ENCODE measurements at regions of chr1 and their contacts with region 1.

Region 1: GRCh38 chr1:156689035-156689952 is 12.1 kb upstream of the NES start:
- DNase-seq: peak; percentile 76 to 91 (median 88)
- ATAC-seq: peak; percentile 86 to 92
- H3K4me3 ChIP-seq: no peak overlapping the region
- H3K27ac ChIP-seq: no peak overlapping the region
- H3K4me1 ChIP-seq: no peaks in the 10 kb centered on the region
- H3K27me3 ChIP-seq: no peaks in the 10 kb centered on the region

Region 2: DNA sequence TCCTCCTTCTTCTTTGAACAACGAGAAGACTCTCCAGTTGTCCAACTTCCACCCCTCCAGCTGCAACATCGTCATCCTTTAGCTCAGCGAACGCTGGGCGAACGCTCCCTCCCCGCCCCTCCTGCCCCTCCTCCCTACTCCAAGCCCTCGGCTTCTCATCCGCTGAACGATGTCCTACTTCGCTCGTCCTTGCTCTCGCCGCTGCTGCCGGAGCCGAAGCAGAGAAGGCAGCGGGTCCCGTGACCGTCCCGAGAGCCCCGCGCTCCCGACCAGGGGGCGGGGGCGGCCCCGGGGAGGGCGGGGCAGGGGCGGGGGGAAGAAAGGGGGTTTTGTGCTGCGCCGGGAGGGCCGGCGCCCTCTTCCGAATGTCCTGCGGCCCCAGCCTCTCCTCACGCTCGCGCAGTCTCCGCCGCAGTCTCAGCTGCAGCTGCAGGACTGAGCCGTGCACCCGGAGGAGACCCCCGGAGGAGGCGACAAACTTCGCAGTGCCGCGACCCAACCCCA is 47.5 kb before region 1 on chr1 and contains the start of gene BCAN:
- intact Hi-C with region 1: no loop called
- DNase-seq: no peak
- ATAC-seq: peak; percentile 58 to 65
- H3K4me3 ChIP-seq: peak within 1 kb of the TSS; percentile 56
- H3K27ac ChIP-seq: no peak within 1 kb of the TSS
- H3K4me1 ChIP-seq: no peaks in the 10 kb centered on the region
- H3K27me3 ChIP-seq: no peaks in the 10 kb centered on the region
- total RNA-seq, gene BCAN: 0.23 to 0.29 TPM in 2 of 4 donors, not detected in the others

Region 3: GRCh38 chr1:156721535-156721934 is 32.2 kb after region 1 on chr1:
- intact Hi-C with region 1: loop called (anchors 2 to 5 kb)
- DNase-seq: no peak
- ATAC-seq: no peak
- H3K4me3 ChIP-seq: no peak overlapping the region
- H3K27ac ChIP-seq: no peak overlapping the region
- H3K4me1 ChIP-seq: peaks cover 9% of the 10 kb centered on the region
- H3K27me3 ChIP-seq: no peaks in the 10 kb centered on the region

Region 4: GRCh38 chr1:156728597-156729462 is 39.5 kb after region 1 on chr1 and contains the start of gene ISG20L2:
- intact Hi-C with region 1: loop called (anchors 2 to 5 kb)
- DNase-seq: peak; percentile 98 to 99 (median 99)
- ATAC-seq: peak; percentile 96 to 97
- H3K4me3 ChIP-seq: peak within 1 kb of the TSS; percentile 64
- H3K27ac ChIP-seq: peak within 1 kb of the TSS; percentile 78
- H3K4me1 ChIP-seq: peaks cover 18% of the 10 kb centered on the region
- H3K27me3 ChIP-seq: no peaks in the 10 kb centered on the region
- total RNA-seq, gene ISG20L2: 13.0 to 23.0 (median 13.9) TPM

Region 5: GRCh38 chr1:156767101-156767878 is 78.0 kb after region 1 on chr1 and contains the start of gene PRCC:
- intact Hi-C with region 1: no loop called
- DNase-seq: peak; percentile 97 to 98 (median 98)
- ATAC-seq: peak; percentile 97 to 98
- H3K4me3 ChIP-seq: peak within 1 kb of the TSS; percentile 96
- H3K27ac ChIP-seq: peak within 1 kb of the TSS; percentile 93
- H3K4me1 ChIP-seq: peaks cover 2% of the 10 kb centered on the region
- H3K27me3 ChIP-seq: no peaks in the 10 kb centered on the region
- total RNA-seq, gene PRCC: 36.3 to 47.1 (median 44.1) TPM

Region 6: DNA sequence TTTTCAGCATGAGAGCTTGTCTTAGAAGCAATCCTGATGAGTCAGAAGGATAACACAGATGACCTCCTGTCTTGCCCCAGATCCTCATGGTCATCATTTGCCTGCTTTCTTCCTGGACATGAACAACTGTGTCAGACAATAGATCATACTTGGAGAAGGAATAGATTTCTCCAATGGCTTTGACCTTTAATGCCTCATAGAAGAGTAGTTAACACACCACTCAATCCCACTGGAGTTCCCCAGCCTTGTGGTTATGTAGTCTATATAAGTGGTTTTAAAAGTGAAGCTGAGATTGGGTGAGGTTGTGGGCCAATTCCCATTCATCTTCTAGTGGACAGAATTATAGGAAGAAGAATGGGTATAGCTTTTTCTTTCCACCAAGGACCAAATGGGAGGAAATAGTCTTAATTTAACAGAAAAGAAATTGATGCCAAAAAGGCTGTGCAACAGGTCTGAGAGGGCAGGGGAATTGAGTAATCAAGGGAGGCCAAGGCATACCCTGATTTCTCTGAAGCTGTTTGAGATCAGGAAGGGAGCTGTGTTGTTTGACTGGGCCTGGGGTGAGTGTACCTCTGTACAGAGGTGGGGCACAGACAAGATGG is 92.4 kb after region 1 on chr1:
- intact Hi-C with region 1: no loop called
- DNase-seq: no peak
- ATAC-seq: peak in 1 of 2 donors; percentile 53
- H3K4me3 ChIP-seq: no peak overlapping the region
- H3K27ac ChIP-seq: no peak overlapping the region
- H3K4me1 ChIP-seq: peaks cover 3% of the 10 kb centered on the region
- H3K27me3 ChIP-seq: no peaks in the 10 kb centered on the region

Region 7: DNA sequence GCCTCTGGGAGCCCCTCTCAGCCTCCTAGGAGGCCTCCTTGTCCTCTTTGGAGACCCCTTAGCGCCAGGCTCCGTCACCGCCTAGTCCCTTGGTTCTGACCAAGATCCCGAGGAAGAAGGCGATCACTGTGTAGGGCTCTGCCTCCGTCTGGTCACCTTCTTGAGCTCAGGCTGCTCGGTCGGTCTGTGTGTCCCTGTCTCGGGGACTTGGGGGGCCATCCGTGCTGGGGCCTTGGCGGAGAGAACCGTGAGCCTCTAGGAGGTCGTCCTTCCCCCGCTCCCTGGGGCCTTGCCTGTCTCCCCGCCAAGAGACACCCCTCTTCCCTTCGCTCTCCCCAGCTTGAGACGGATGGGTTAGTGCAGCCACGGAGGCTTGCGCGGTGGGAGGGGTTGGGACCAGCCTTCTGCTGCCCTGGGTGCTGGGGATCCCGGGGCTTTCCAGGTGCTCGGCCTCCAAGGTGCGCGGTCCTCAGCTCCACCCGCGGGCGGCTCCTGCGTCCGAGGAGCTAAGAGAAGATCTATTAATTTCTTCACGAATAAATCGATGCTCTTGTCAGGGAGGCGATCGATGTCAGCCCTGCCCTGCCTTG is 170.3 kb after region 1 on chr1:
- intact Hi-C with region 1: loop called in 1 of 4 experiments (anchors 10 kb)
- DNase-seq: peak in 2 of 3 donors; percentile 64 to 65
- ATAC-seq: peak; percentile 55
- H3K4me3 ChIP-seq: peak overlapping the region; percentile 27
- H3K27ac ChIP-seq: no peak overlapping the region
- H3K4me1 ChIP-seq: peaks cover 4% of the 10 kb centered on the region
- H3K27me3 ChIP-seq: no peaks in the 10 kb centered on the region

Region 8: GRCh38 chr1:156892190-156893047 is 203.1 kb after region 1 on chr1:
- intact Hi-C with region 1: loop called in 2 of 4 experiments (anchors 10 kb)
- DNase-seq: peak; percentile 96 to 98 (median 98)
- ATAC-seq: peak; percentile 89 to 90
- H3K4me3 ChIP-seq: peak overlapping the region; percentile 24
- H3K27ac ChIP-seq: peak overlapping the region; percentile 31
- H3K4me1 ChIP-seq: no peaks in the 10 kb centered on the region
- H3K27me3 ChIP-seq: no peaks in the 10 kb centered on the region

Region 9: GRCh38 chr1:157000686-157001085 is 311.4 kb after region 1 on chr1:
- intact Hi-C with region 1: no loop called
- DNase-seq: no peak
- ATAC-seq: no peak
- H3K4me3 ChIP-seq: no peak overlapping the region
- H3K27ac ChIP-seq: no peak overlapping the region
- H3K4me1 ChIP-seq: peaks cover 9% of the 10 kb centered on the region
- H3K27me3 ChIP-seq: no peaks in the 10 kb centered on the region

Measured in right cardiac atrium (tissue), 5 donors.